ENCODE measurements at regions of chr3 and their contacts with region 1.

Region 1: GRCh38 chr3:55746808-55747413 is 259.8 kb upstream of the WNT5A start:
- DNase-seq: peak; percentile 15
- H3K4me3 ChIP-seq: no peak overlapping the region
- H3K27ac ChIP-seq: no peak overlapping the region
- H3K4me1 ChIP-seq: no peaks in the 10 kb centered on the region
- H3K27me3 ChIP-seq: no peaks in the 10 kb centered on the region
- CTCF ChIP-seq: peak; percentile 69
- EP300 ChIP-seq: no peak
- RAD21 ChIP-seq: peak; percentile 60

Region 2: GRCh38 chr3:55330355-55330754 is 416.6 kb before region 1 on chr3:
- CTCF ChIA-PET with region 1: no interaction called
- POLR2A ChIA-PET with region 1: no interaction called
- DNase-seq: no peak
- H3K4me3 ChIP-seq: no peak overlapping the region
- H3K27ac ChIP-seq: peak overlapping the region; percentile 39 to 97; a peak in 3 of 4 replicates
- H3K4me1 ChIP-seq: peaks cover 0 to 28% of the 10 kb centered on the region in 2 experiments; a peak in 2 of 4 replicates
- H3K27me3 ChIP-seq: no peaks in the 10 kb centered on the region
- CTCF ChIP-seq: no peak
- EP300 ChIP-seq: peak in 1 of 2 experiments; percentile 71; a peak in 2 of 4 replicates
- RAD21 ChIP-seq: no peak

Region 3: GRCh38 chr3:55485211-55485791 is 261.6 kb before region 1 on chr3:
- CTCF ChIA-PET with region 1: interaction called, 24 read pairs
- POLR2A ChIA-PET with region 1: no interaction called
- DNase-seq: peak; percentile 92
- H3K4me3 ChIP-seq: peak overlapping the region; percentile 78 to 83
- H3K27ac ChIP-seq: peak overlapping the region; percentile 24 to 88; a peak in 3 of 4 replicates
- H3K4me1 ChIP-seq: peaks cover 0 to 29% of the 10 kb centered on the region in 2 experiments; a peak in 2 of 4 replicates
- H3K27me3 ChIP-seq: no peaks in the 10 kb centered on the region
- CTCF ChIP-seq: peak; percentile 47
- EP300 ChIP-seq: no peak
- RAD21 ChIP-seq: peak; percentile 71

Region 4: GRCh38 chr3:55728461-55729100 is 18.3 kb before region 1 on chr3:
- CTCF ChIA-PET with region 1: interaction called, 20 read pairs
- POLR2A ChIA-PET with region 1: no interaction called
- DNase-seq: no peak
- H3K4me3 ChIP-seq: no peak overlapping the region
- H3K27ac ChIP-seq: no peak overlapping the region
- H3K4me1 ChIP-seq: peaks cover 7% of the 10 kb centered on the region in 2 experiments; a peak in 2 of 4 replicates
- H3K27me3 ChIP-seq: no peaks in the 10 kb centered on the region
- CTCF ChIP-seq: no peak
- EP300 ChIP-seq: no peak
- RAD21 ChIP-seq: no peak

Region 5: GRCh38 chr3:55735976-55736375 is 10.9 kb before region 1 on chr3:
- CTCF ChIA-PET with region 1: interaction called, 20 read pairs
- POLR2A ChIA-PET with region 1: no interaction called
- DNase-seq: no peak
- H3K4me3 ChIP-seq: no peak overlapping the region
- H3K27ac ChIP-seq: no peak overlapping the region
- H3K4me1 ChIP-seq: no peaks in the 10 kb centered on the region
- H3K27me3 ChIP-seq: no peaks in the 10 kb centered on the region
- CTCF ChIP-seq: no peak
- EP300 ChIP-seq: no peak
- RAD21 ChIP-seq: no peak

Measured in SK-N-SH (cell line).